HEK293 (cell line): ENCODE measurements at regions of chr2 and their contacts with region 1.

Region 1: DNA sequence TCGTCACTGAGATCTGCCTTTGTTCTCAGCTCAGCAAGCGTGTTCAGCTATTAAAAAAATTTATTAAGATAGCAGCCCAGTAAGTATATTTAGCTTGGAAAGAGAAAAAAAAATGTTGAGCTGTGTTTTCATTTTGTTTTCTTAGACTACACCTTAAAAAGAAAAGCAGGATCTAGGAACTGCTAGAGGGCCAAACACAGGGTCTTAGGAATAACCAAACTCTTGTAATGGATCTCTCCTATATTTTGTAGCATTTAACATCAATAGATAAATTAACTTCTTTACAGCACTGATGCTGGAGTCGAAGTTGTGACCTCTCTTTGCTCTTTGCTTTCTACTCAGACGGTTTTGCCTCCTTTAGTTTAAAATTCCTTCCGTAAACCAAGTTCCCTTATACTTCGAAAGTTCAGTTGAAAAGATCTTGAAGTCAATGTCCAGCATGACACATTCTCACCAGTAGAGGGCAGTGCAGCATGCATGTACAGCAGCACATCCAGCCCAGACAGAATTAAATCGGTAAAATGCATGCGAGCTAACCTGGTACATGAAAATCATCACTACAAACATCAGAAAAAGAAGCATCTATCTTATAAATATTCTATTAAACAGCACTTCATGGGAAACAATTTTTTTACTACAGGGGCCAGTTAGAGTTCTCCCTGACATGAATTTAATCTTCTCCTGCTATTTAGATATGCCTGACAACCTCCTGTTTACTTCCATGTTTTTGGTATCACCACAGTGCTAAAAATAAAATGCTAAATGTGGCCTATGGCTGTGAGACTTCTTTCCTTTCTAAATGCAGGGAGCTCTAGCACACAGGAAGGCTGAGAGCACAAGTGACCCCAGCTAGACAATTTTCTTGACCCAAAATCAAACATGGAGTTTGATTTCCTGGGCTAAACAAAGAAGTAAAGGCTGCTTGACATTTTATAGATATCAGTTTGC is 48.2 kb upstream of the MAP3K20 start:
- H3K4me3 ChIP-seq: no peak overlapping the region
- H3K27ac ChIP-seq: no peak overlapping the region
- H3K4me1 ChIP-seq: 0 out of 2 replicates have a peak, but pooled peaks cover 3% of the 10 kb centered on the region
- CTCF ChIP-seq: peak; percentile 78; the same call in 1 of the 2 replicates

Region 2: GRCh38 chr2:172783091-172783898 is 244.2 kb before region 1 on chr2:
- CTCF ChIA-PET with region 1: no interaction called
- POLR2A ChIA-PET with region 1: no interaction called
- H3K4me3 ChIP-seq: no peak overlapping the region
- H3K27ac ChIP-seq: no peak overlapping the region
- H3K4me1 ChIP-seq: peaks cover 3% of the 10 kb centered on the region; the same call in 1 of the 2 replicates
- CTCF ChIP-seq: no peak

Region 3: GRCh38 chr2:173008786-173009185 is 18.7 kb before region 1 on chr2:
- CTCF ChIA-PET with region 1: interaction called, 17 read pairs
- POLR2A ChIA-PET with region 1: no interaction called
- H3K4me3 ChIP-seq: no peak overlapping the region
- H3K27ac ChIP-seq: no peak overlapping the region
- H3K4me1 ChIP-seq: peaks cover under 1% of the 10 kb centered on the region
- CTCF ChIP-seq: no peak

Region 4: GRCh38 chr2:173043476-173043875 is 16.0 kb after region 1 on chr2:
- CTCF ChIA-PET with region 1: interaction called, 22 read pairs
- POLR2A ChIA-PET with region 1: no interaction called
- H3K4me3 ChIP-seq: no peak overlapping the region
- H3K27ac ChIP-seq: no peak overlapping the region
- H3K4me1 ChIP-seq: 0 out of 2 replicates have a peak, but pooled peaks cover 2% of the 10 kb centered on the region
- CTCF ChIP-seq: no peak

Region 5: DNA sequence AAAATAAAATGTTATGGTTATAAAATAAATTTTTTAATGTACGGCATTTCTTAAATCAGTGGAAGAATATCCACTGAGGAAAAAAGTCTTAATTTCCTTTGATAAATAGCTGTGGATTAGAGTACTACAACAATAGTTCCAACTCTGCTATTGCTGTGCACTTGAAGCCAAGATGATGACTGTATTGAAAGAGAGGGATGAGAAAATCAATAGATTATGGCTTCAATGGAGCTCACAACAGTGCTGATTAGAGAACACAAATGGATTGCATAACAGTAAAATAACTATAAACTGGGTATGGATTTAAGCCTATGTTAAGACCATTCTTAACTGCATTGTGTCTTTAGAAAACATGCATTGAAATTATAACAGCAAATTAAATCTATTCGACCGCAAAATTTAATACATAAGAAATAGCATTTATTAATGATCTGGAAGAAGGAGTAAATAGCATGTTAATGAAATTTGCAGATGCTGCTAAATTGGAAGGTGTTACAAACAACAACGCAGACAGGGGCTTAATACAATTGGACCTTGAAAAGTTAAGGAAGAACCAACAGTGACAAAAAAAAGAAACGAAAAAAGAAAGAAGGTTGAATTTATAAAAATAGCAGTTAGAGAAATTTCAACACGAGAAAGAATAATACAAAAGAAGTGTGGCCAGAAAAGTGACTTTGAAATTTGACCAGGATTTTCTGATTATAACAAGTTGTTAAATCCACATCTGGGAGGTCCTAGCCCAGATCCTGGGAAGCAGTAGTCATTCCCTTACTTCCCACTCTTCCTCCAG is 39.6 kb after region 1 on chr2:
- CTCF ChIA-PET with region 1: interaction called, 15 read pairs
- POLR2A ChIA-PET with region 1: no interaction called
- H3K4me3 ChIP-seq: no peak overlapping the region
- H3K27ac ChIP-seq: no peak overlapping the region
- H3K4me1 ChIP-seq: no peaks in the 10 kb centered on the region
- CTCF ChIP-seq: no peak

Region 6: GRCh38 chr2:173184031-173185004 is 156.9 kb after region 1 on chr2:
- CTCF ChIA-PET with region 1: interaction called, 18 read pairs
- POLR2A ChIA-PET with region 1: no interaction called
- H3K4me3 ChIP-seq: no peak overlapping the region
- H3K27ac ChIP-seq: no peak overlapping the region
- H3K4me1 ChIP-seq: peaks cover 3% of the 10 kb centered on the region
- CTCF ChIP-seq: no peak